ENCODE measurements at regions of chr2 and their contacts with region 1.

Region 1: DNA sequence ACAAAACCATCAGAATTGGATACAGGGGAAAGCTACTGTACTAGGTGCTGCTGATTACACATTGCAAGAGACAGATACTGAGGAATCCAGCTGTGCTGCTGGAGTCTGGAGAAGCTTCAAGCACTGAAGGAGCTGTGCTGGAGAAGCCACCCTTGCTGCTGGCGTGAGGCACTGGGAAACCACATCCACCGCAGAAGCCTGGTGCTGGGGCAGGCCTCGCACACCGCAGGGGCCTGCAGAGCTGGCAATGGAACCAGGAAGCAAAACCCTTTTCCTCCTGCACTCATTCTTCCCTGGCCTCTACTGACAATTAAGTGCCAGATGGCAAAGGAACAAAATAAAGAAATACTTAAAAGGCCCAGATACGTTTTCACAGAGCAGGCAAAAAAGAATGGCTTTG is 94.4 kb upstream of the MSH6 start:
- DNase-seq: no peak

Region 2: GRCh38 chr2:47617028-47617427 is 71.5 kb before region 1 on chr2:
- intact Hi-C with region 1: loop called (anchors 2 kb)
- DNase-seq: peak in 2 of 10 donors; percentile 20 to 66

Region 3: GRCh38 chr2:47842846-47843245 is 154.3 kb after region 1 on chr2:
- intact Hi-C with region 1: no loop called
- DNase-seq: no peak

Measured in posterior cingulate gyrus (tissue), 11 donors.